ENCODE measurements at regions of chr16 and their contacts with region 1.

Region 1: DNA sequence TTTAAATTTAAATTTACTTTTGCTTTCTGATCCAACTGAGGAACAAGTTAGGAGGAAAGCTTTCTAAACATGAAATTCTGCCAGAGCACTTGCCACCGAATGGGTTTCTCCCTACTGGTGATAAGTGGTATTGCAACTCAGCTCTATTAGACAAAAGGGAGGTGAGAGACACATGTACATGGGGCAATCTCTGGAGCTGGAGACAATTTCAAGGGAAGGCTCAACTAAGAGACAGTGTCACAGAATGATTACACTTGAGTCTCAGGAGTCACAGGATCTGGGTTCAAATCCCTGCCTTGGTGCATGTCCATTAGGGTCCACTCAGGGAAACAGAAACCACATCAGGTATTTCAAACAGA is 37.4 kb downstream of the SOCS1 start:
- DNase-seq: no peak
- ATAC-seq: no peak
- H3K4me3 Mint-ChIP-seq: no peak overlapping the region
- H3K27ac Mint-ChIP-seq: no peak overlapping the region
- H3K4me1 Mint-ChIP-seq: peaks cover 32% of the 10 kb centered on the region
- H3K27me3 Mint-ChIP-seq: no peaks in the 10 kb centered on the region

Region 2: DNA sequence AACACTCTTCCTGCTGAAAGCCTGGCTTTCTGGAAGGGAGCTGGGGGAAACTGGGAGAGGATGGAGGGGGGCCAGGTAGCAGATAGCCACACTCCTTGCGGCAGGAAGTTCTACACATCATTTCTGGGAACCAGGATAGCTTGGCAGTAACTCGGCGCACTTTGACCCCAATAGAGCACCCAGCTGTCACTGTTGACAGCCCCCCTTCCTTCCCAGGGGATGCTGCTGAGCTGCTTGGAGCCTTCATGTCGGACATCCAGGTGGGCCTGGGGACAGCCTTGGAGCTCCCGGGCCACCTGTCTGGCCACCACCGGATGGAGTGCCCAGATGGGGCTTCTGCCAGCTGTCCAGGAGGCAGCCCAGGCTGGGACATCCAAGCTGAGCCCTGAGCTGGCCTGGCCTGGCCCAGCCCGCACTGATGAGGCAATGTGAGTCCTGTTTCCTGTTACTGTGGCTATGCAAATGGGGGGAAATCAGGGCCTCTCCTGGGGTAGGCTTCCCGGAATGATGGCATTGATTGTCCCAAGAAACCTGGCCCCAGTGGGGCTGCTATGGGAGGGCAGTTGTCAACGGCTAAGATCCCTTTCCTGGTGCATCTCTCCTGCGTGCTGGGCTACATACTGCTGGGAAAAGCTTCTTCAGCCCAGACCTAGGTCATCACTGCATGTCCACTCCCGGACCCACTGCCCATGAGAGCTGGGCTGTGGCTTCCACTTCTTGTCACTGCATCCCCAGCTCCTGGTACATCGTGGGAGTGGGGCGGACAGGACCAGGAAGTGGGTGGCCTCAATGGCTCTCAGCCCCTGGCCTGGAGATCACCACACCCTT is 12.6 kb before region 1 on chr16:
- CTCF ChIA-PET with region 1: interaction called, 20 read pairs
- DNase-seq: no peak
- ATAC-seq: peak; percentile 46
- H3K4me3 Mint-ChIP-seq: no peak overlapping the region
- H3K27ac Mint-ChIP-seq: peak overlapping the region; percentile 89
- H3K4me1 Mint-ChIP-seq: peaks cover 45% of the 10 kb centered on the region
- H3K27me3 Mint-ChIP-seq: no peaks in the 10 kb centered on the region

Region 3: DNA sequence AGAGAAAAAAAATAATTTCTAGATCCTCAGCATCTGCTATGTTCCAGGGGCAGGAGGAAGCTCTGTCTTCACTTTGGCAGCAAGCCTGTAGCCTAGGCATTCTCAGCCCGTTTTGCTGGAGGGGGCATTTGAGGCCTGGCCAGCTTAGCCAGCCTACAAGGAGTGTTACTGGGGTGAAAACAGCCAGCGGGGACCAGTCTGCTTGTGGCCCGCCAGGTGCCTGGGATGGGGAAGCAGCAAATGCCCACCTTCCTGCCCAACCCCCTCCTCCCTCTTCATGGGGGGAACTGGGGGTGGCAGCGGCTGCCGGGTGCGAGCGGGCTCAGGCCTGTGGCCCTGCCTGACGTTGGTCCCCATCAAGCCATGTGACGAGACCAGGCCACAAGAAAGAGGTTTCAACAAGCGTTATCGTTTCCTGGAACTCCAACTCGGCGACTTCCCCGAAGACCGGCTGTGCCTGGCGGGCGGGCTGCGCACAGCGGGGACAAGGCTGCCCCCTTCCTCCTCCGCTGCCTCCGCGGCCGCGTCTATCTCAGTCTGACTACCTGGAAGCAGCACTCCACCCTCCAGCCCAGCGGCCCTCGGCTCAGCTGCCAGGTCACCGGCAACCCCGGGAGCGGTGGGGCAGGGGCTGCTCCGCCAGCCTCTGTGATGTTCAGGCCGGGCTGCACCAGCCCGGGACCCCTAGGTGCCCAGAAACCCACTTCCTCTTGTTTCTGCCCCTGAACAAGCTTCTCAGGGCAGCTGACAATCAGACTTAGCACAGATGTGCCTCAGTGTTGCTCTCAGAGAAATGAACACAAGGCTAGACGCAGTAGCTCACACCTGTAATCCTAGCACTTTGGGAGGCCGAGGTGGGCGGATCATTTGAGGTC is 14.5 kb after region 1 on chr16:
- CTCF ChIA-PET with region 1: interaction called, 14 read pairs
- DNase-seq: peak; percentile 98
- ATAC-seq: peak; percentile 88
- H3K4me3 Mint-ChIP-seq: peak overlapping the region; percentile 63
- H3K27ac Mint-ChIP-seq: peak overlapping the region; percentile 96
- H3K4me1 Mint-ChIP-seq: peaks cover 79% of the 10 kb centered on the region
- H3K27me3 Mint-ChIP-seq: no peaks in the 10 kb centered on the region

Region 4: GRCh38 chr16:11263737-11264136 is 45.2 kb after region 1 on chr16:
- CTCF ChIA-PET with region 1: no interaction called
- DNase-seq: peak; percentile 75
- ATAC-seq: peak; percentile 76
- H3K4me3 Mint-ChIP-seq: peak overlapping the region; percentile 2
- H3K27ac Mint-ChIP-seq: peak overlapping the region; percentile 33
- H3K4me1 Mint-ChIP-seq: peaks cover 29% of the 10 kb centered on the region
- H3K27me3 Mint-ChIP-seq: peaks cover 36% of the 10 kb centered on the region